Left cardiac atrium (tissue), 4 donors: ENCODE measurements at regions of chrX and their contacts with region 1.

Region 1: GRCh38 chrX:74421036-74421739 is at the start of gene SLC16A2:
- DNase-seq: peak; percentile 75
- ATAC-seq: peak; percentile 73 to 78
- total RNA-seq, gene SLC16A2: 9.1 to 12.3 TPM

Region 2: DNA sequence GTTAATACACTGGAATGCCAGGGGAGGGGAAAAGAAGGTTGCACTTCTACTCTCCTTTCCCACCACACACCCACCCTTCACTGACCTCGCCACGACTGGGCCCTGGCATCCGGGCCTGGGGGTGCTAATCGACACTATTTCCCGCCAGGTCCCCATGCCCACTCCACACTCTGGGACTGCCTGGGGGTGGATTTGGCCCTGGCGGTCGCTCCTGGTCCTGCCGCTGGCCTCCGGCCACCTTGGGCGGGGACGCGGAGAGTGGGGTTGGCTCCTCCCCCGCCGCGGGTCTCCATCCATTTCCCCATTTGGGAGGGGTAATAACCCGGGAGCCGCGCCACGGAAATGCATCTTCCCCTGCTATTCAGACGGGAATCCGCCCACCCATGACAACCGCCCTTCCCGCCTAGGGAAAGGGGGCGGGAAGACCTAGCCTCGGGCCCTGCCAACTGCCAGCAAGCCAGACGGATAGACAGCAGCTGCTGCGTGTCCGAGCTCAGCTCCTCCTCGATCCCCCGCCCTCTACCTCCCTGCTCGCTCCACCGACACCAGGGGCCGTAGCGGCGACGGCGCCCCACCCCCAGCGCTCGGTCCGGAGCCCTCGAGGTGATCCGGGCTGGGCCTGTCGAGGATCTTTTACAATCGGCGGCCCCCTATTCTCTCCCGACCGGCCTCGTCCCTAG is 115.1 kb after region 1 on chrX:
- intact Hi-C with region 1: loop called in 1 of 2 experiments (anchors 5 kb)
- DNase-seq: peak; percentile 90
- ATAC-seq: peak; percentile 90 to 94

Region 3: DNA sequence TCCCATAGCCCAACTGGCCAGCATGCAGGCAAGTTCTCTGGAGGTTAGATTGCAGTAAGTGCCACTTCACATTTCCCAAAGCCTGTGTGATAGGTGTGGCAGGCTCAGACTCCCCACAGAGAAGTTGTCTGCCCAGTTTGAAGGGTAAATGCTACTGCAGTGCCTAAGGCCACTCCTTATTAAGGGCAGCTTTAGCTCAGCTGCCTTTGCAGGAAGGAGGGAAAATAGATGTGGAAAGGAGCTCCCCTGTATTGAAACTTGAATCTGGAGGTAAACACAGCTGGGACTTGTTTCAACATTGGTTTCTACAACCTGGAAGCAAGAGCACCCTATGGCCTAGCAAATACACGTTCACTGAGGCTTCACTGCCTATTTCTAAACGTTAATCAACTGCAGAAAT is 481.6 kb after region 1 on chrX:
- intact Hi-C with region 1: no loop called
- DNase-seq: no peak
- ATAC-seq: no peak